Adrenal gland (tissue), 19 donors: ENCODE measurements at regions of chr2 and their contacts with region 1.

Region 1: DNA sequence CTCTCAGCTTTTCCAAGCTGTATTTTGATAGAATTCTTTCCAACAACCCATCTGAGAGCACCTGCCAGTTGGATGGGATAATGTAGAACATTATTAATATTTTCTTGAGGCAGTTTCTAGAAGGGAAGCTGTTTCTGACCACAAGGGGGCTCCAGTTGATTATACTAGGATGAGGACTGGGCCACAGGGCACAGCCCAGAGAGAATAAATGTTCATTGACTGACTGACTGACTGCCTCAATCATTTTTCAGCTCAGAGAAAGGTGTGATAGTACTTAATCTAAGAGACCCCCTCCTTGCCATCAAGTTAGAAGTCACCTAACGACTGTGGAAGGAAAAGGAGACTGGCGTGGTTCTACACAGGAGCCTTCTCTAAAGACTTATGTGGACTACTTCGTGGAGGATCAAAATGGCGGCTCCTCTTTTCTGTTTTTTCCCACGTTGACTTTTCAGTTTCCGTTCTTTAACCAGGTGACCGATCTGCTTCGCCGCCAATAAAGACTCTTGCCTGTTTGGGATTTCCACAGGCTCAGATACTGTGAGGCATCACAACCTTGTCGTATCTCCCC is 31.9 kb upstream of the CREG2 start:
- DNase-seq: peak; percentile 33 to 74 (median 49)
- H3K4me3 ChIP-seq: no peak overlapping the region
- H3K27ac ChIP-seq: no peak overlapping the region
- H3K4me1 ChIP-seq: no peaks in the 10 kb centered on the region
- H3K27me3 ChIP-seq: no peaks in the 10 kb centered on the region
- CTCF ChIP-seq: peak; percentile 48 to 69 (median 64)
- POLR2A ChIP-seq: no peak

Region 2: DNA sequence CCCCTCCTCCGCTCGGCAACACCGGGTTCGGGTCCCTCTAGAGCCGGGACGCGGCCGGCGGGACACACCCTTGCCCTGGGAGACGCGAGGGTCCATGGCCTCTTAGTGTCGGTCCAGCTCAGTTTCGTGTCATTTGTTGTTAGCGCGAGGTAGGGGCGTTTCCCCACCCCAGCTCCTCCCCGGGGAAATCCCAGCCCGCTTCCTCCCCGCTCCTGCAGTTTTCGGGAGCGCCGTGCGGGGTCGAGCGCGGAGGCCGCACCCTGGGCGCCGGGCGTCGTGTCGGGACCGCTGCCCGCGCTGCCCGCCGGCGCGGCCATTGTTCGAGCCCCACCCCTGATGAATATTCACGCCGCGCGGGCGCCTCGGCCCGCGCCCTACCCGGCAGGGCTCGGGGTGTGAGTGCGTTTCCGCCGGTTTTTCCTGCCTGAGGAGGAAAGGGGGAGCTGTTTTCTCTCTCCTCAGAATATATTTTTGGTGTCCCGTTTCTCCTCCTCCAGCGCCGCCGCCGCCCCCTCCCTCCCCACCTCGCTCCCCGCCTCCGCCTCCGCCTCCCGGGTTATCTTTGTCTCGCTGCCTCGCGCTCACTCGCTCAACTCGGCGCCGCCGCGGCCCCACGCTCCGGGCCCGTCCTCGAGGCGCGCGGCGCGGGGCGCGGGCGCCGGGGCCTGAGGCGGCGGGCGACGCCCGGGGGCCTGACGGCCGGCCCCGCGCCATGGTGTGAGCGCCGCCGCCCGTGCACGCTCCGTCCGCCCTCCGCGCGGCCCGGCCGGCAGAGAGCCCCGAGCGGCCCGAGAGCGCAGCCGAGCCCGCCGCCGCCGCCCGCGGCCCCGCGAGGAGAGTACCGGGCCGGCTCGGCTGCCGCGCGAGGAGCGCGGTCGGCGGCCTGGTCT is 278.2 kb after region 1 on chr2 and contains the start of gene MAP4K4:
- intact Hi-C with region 1: loop called in 1 of 2 experiments (anchors 10 kb)
- DNase-seq: peak; percentile 64 to 83 (median 76)
- H3K4me3 ChIP-seq: peak within 1 kb of the TSS in 3 of 4 donors; percentile 36 to 91 (median 85)
- H3K27ac ChIP-seq: peak within 1 kb of the TSS in 4 of 5 donors; percentile 6 to 87 (median 42)
- H3K4me1 ChIP-seq: peaks cover 3 to 35% of the 10 kb centered on the region in 2 donors
- H3K27me3 ChIP-seq: no peaks in the 10 kb centered on the region
- CTCF ChIP-seq: peak in 1 of 6 experiments; percentile 26
- POLR2A ChIP-seq: peak in 1 of 2 donors; percentile 34
- total RNA-seq, gene MAP4K4: 11.6 to 43.1 (median 23.0) TPM

Region 3: DNA sequence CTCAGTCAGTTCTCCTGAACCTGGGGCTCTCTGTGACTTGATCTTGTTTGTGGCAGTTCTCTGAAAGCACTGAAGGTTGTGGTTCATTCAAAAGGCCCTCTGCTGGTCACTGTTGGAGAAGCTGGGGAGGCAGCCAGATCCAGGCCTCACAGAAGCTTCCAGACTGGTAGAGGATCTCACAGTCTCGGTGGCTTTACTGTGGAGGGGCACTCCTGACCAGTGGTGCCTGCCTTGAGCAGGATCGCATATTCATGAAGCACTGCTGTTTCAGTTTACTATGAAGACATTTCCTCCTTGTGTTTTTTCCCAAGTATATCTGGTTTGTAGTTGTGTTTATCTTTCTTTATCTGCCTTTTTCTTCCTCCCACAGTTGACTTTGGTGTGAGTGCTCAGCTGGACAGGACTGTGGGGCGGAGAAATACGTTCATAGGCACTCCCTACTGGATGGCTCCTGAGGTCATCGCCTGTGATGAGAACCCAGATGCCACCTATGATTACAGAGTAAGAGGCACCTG is 412.2 kb after region 1 on chr2:
- intact Hi-C with region 1: loop called in 1 of 2 experiments (anchors 10 kb)
- DNase-seq: peak; percentile 64 to 91 (median 71)
- H3K4me3 ChIP-seq: no peak overlapping the region
- H3K27ac ChIP-seq: peak overlapping the region in 1 of 5 donors; percentile 24
- H3K4me1 ChIP-seq: no peaks in the 10 kb centered on the region
- H3K27me3 ChIP-seq: no peaks in the 10 kb centered on the region
- CTCF ChIP-seq: peak; percentile 49 to 81 (median 70)
- POLR2A ChIP-seq: no peak

Region 4: GRCh38 chr2:101844055-101844635 is 425.0 kb after region 1 on chr2:
- intact Hi-C with region 1: loop called (anchors 10 kb)
- DNase-seq: no peak
- H3K4me3 ChIP-seq: no peak overlapping the region
- H3K27ac ChIP-seq: no peak overlapping the region
- H3K4me1 ChIP-seq: peaks cover 0 to 9% of the 10 kb centered on the region in 2 donors
- H3K27me3 ChIP-seq: no peaks in the 10 kb centered on the region
- CTCF ChIP-seq: no peak
- POLR2A ChIP-seq: no peak